ENCODE measurements at regions of chr3 and their contacts with region 1.

Region 1: GRCh38 chr3:54427941-54428871 is 305.9 kb downstream of the CACNA2D3 start:
- ATAC-seq: peak; percentile 12 to 73 (median 61)
- H3K4me3 ChIP-seq: no peak overlapping the region
- H3K27ac ChIP-seq: no peak overlapping the region
- H3K4me1 ChIP-seq: peaks cover 17 to 22% of the 10 kb centered on the region in 2 donors

Region 2: DNA sequence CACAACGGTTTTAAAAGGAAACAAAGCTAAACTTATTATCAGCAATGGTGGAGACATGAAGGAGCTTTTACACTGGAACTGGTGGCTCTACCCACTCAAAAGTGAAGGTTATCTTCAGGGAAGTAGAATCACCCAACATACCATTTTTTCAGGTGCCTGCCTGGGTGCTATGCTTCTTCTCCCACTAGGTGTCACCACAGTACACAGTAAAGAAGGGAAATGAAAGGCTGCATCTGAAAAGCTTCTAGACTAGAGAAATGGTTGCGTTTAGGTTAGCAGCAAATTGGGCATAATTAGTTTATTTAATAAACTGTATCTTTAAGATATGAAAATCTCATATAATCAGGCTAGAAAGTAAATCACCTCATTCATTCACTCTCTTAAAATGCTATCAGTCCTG is 489.6 kb before region 1 on chr3:
- in situ Hi-C with region 1: loop called in 1 of 9 experiments (anchors 25 kb)
- ATAC-seq: peak; percentile 53 to 83 (median 67)
- H3K4me3 ChIP-seq: no peak overlapping the region
- H3K27ac ChIP-seq: no peak overlapping the region
- H3K4me1 ChIP-seq: peaks cover 0 to 2% of the 10 kb centered on the region in 2 donors

Region 3: DNA sequence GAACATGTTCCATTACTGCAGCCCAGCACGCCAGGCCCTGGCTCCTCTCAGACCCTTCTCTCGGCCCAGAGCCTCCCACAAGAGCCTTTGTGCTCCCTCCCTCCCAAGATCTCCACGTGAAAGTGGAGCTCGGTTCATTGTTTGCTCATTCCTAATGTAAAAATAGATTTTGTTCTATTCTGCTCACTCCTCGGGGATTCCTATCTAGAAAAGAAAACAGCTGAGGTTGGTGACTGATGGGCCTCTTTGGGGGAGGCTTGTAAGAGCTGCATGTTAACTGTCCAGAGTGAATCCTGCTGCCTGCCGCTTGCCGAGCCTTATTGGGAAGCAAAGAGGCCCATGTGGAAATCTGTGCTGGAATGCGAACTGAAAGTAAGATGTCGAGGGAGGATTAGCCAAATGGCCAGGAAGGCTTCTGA is 232.5 kb after region 1 on chr3:
- in situ Hi-C with region 1: loop called in 1 of 9 experiments (anchors 25 kb)
- ATAC-seq: peak in 5 of 8 experiments; percentile 24 to 77 (median 66)
- H3K4me3 ChIP-seq: no peak overlapping the region
- H3K27ac ChIP-seq: no peak overlapping the region
- H3K4me1 ChIP-seq: peaks cover 2 to 13% of the 10 kb centered on the region in 2 donors

Region 4: DNA sequence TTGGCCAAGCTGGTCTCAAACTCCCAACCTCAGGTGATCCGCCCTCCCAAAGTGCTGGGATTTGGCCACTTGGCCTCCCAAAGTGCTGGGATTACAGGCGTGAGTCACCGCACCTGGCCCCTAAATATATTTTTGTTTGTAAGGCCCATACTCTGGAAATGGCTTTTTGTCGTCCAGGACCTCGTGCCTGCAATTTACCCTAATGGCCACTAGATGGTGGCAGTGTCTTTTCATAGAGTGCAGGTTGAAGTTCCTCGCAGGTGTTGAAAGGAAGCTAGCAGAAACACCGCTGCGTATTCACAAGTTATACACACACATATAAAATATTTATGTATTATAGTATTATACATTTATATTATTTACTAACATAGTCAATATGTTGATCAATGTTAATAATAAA is 402.5 kb after region 1 on chr3:
- in situ Hi-C with region 1: loop called in 3 of 9 experiments (anchors 25 kb)
- ATAC-seq: no peak
- H3K4me3 ChIP-seq: no peak overlapping the region
- H3K27ac ChIP-seq: no peak overlapping the region
- H3K4me1 ChIP-seq: no peaks in the 10 kb centered on the region

Region 5: DNA sequence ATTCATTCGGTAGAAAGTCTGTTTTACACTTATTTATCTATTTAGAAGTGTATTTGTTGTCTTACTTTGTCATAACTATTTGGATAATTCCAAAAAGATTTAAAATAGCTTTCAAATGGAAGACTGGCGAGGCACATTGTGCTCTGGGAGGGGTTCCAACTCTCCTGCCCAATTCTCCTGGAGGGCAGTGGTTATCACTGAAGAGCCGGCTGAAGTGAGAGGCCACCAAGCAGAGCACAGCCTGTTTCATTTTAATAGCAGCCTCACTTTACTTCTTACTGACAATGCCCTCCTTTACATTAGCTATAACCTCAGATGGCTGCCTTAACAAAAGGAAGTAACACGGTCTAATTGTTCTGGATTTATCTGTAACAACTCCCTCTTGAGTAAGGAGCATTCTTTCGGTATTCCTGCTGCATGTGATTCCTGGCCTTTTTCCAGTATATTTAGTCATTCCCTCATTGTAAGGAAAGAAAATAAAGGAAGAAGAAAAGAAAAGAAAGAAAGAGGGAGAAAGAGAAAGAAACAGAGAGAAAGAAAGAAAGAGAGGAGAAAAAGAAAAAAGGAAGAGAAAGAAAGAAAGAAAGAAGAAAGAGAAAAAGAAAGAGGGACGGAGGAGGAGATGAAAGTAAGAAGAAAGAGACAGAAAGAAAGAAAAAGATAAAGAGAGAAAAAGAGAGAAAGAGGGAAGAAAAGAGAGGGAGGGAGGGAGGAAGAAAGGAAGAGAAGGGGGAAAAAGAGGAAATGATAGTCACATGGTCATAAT is 1398.7 kb after region 1 on chr3:
- in situ Hi-C with region 1: no loop called
- ATAC-seq: no peak
- H3K4me3 ChIP-seq: no peak overlapping the region
- H3K27ac ChIP-seq: no peak overlapping the region
- H3K4me1 ChIP-seq: peaks cover 0 to 5% of the 10 kb centered on the region in 2 donors

Measured in motor neuron (in vitro differentiated cells).